Lower leg skin (tissue), 4 donors: ENCODE measurements at regions of chr12 and their contacts with region 1.

Region 1: DNA sequence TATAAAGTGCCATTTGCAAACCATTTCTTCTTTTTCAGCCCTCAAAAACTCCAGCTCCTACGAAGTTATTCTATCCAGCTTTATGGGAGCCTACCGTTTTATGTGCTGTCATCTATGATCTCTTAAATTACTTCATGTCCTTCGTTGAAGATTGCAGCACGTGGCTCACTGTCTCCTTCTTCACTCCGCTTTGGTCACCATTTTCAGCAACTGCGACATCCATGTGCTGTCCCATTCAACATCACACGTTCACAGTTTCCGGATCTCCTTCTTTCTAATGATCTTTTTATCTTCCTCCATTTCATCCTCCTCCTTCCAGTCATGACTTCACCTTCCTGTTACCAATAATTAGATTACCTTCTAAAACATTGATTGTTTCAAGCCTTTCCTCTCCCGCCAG is 143.3 kb upstream of the KRAS start:
- DNase-seq: no peak
- H3K4me3 ChIP-seq: no peak overlapping the region
- CTCF ChIP-seq: no peak
- POLR2A ChIP-seq: no peak

Region 2: DNA sequence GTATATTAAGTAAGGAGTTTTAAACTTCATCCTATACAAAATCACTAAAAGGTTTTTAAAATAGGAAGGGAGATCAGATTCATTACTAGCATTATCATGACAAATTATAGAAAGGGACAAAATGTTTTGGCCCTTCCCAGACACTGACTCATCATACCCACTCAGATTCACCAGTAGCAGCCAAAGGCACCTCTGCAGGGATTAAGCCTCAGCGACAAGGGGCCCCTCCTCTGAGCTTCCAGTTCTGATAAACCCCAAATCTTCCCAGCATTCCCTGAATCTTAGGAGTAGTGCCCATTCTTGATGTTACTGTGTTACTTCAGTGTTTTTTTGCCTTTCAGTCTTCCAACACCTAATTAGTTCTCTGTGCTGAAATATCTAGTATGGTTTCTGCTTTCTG is 157.8 kb before region 1 on chr12:
- intact Hi-C with region 1: loop called (anchors 5 kb)
- DNase-seq: no peak
- H3K4me3 ChIP-seq: no peak overlapping the region
- CTCF ChIP-seq: no peak
- POLR2A ChIP-seq: no peak